Activated CD4-positive, alpha-beta T cell treated with anti-CD3 and anti-CD28 coated beads, Interleukin-2, amount 10 ng/mL, durations not matched to agents 24 days and 14 days (primary cell): ENCODE measurements at regions of chr1 and their contacts with region 1.

Region 1: GRCh38 chr1:156096640-156097391 is 14.6 kb upstream of the MEX3A start:
- DNase-seq: peak; percentile 94
- H3K4me3 Mint-ChIP-seq: peak overlapping the region; percentile 47
- H3K27ac Mint-ChIP-seq: peak overlapping the region; percentile 97
- H3K4me1 Mint-ChIP-seq: peaks cover 46% of the 10 kb centered on the region
- H3K27me3 Mint-ChIP-seq: peaks cover 34% of the 10 kb centered on the region

Region 2: DNA sequence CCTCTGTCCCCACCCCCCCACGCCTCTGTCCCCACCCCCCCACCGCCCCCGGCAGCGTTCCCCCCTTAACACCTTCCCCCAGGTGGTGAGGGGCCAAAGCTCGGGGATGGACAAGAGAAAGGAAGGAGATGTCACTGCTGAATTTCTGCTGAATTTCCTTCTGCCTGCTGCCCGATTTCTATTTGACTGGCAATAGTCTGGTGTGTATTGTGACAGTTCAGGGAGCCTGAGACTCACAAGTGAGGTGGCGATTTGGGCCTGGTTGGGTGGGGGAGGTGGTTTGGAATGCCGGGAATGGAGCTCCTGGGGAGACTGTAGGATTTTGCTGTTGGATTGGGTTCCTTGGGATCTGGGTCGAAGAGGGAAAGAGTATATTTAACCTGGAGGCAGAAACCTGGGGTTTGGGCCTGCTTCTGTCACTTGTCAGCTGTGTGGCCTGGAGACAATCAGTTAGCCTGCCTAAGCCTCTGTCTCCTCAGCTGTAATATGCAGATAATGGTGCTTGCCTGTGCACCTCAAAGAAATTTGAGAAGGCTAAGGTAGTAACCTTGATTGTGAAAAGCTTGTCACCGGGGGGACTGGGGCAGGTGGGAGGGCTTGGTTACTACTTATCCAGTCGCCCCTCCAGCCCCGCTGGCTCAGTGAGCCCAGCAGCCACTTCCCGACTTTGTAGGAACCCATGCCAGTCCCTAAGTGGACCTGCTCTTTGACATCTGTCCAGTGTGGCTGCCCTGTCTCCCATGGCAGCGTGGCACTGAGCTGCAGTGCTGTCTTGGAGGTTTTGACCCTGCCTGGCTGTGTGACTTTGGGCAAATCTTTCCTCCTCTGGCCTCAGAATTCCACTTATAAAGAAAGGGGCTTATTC is 10.0 kb after region 1 on chr1:
- intact Hi-C with region 1: loop called (anchors 1 kb)
- DNase-seq: no peak
- H3K4me3 Mint-ChIP-seq: peak overlapping the region; percentile 72
- H3K27ac Mint-ChIP-seq: peak overlapping the region; percentile 96
- H3K4me1 Mint-ChIP-seq: peaks cover 45% of the 10 kb centered on the region
- H3K27me3 Mint-ChIP-seq: peaks cover 33% of the 10 kb centered on the region

Region 3: GRCh38 chr1:156114101-156114916 is 17.5 kb after region 1 on chr1 and contains the start of gene LMNA:
- intact Hi-C with region 1: loop called (anchors 1 kb)
- DNase-seq: peak; percentile 88
- H3K4me3 Mint-ChIP-seq: peak within 1 kb of the TSS; percentile 92
- H3K27ac Mint-ChIP-seq: peak within 1 kb of the TSS; percentile 81
- H3K4me1 Mint-ChIP-seq: peaks cover 28% of the 10 kb centered on the region
- H3K27me3 Mint-ChIP-seq: peaks cover 45% of the 10 kb centered on the region
- total RNA-seq, gene LMNA: 105 and 110 TPM in 2 replicates